ENCODE measurements at regions of chr16 and their contacts with region 1.

Region 1: GRCh38 chr16:75464130-75464918 is at the start of gene TMEM170A:
- DNase-seq: peak; percentile 85
- H3K4me3 ChIP-seq: peak within 1 kb of the TSS; percentile 85
- CTCF ChIP-seq: peak; percentile 99

Region 2: GRCh38 chr16:74320707-74321106 is 1143.6 kb before region 1 on chr16:
- CTCF ChIA-PET with region 1: no interaction called
- POLR2A ChIA-PET with region 1: no interaction called
- DNase-seq: no peak
- H3K4me3 ChIP-seq: no peak overlapping the region
- CTCF ChIP-seq: no peak

Region 3: DNA sequence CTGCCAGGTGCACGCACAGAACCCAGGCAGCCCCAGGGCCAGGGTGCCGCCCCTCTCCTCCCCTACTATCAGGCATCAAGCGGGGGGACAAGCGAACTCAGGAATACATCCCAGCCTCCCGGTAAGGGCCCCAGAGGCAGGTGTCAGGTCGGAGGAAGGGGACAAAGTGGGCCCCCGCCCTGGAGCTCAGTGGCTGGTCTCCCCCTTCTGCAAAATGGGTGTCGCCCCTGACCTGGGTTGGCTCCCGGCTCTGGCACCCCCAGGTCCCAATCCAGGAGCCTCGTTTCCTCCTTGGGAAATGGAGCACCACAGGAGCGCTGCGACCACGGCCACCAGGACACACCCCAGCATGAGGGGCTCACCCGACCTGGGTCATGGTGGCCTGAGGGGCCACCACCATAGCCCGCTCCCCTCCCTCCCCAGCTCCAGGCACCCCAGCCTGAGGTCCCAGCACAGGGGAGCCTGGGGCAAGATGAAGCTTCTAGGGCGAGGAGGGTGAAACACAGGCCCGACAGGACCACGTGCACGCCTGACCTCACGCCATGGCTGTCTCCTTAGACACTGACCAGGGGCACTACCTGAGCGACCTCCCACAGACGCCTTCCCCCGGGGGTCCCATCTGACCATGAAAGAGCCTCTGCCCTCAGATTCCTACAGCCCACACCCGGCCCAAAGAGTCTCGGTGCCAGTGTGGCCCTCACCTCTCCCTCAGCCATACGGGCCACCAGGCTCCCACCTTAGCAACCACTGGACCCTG is 224.8 kb before region 1 on chr16:
- CTCF ChIA-PET with region 1: no interaction called
- POLR2A ChIA-PET with region 1: no interaction called
- DNase-seq: no peak
- H3K4me3 ChIP-seq: no peak overlapping the region
- CTCF ChIP-seq: no peak

Region 4: DNA sequence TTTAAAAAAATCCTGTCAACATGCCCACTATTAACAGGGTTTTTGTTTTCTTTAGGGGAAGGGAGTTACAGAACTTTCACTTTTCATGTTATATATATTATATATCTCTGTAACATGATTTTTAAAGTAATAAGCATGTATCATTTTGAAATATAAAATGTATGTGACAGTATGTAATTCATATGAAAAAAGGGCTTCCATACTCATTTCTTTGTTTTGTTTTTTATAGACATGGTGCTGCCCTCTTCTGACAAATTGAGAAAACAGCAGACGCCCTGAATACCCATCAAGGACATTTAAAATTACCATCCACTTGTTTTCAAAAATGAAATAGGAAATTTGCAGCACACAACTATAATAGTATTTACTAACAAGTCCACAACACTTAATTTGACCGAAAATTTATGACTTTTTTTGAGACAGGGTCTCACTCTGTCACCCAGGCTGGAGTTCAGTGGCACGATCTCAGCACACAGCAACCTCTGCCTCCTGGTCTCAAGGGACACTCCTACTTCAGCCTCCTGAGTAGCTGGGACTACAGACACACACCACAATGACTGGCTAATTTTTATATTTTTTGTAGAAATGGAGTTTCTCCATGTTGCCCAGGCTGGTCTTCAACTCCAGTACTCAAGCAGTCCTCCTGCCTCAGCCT is 61.4 kb before region 1 on chr16:
- CTCF ChIA-PET with region 1: interaction called, 15 read pairs
- POLR2A ChIA-PET with region 1: no interaction called
- DNase-seq: no peak
- H3K4me3 ChIP-seq: no peak overlapping the region
- CTCF ChIP-seq: peak; percentile 39

Region 5: DNA sequence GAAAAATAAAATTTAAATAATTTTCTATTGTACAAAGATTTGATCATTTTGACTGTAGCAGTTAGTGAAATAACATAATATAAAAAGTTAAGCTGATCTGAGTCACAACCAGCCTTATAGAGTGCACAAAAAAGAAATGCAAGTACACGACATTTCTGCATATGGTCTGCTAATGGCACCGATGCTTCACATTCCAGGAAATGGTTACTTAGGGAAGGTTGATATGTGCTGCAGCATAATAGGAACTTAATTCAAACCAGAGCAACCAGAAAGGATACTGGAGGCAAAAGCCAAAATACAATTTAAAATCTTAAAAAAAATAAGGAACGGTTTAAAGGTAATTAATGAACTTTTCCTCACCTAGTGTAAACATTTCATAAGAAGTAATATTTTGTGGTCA is 21.0 kb before region 1 on chr16:
- CTCF ChIA-PET with region 1: interaction called, 34 read pairs
- POLR2A ChIA-PET with region 1: no interaction called
- DNase-seq: peak; percentile 66
- H3K4me3 ChIP-seq: no peak overlapping the region
- CTCF ChIP-seq: no peak

Region 6: DNA sequence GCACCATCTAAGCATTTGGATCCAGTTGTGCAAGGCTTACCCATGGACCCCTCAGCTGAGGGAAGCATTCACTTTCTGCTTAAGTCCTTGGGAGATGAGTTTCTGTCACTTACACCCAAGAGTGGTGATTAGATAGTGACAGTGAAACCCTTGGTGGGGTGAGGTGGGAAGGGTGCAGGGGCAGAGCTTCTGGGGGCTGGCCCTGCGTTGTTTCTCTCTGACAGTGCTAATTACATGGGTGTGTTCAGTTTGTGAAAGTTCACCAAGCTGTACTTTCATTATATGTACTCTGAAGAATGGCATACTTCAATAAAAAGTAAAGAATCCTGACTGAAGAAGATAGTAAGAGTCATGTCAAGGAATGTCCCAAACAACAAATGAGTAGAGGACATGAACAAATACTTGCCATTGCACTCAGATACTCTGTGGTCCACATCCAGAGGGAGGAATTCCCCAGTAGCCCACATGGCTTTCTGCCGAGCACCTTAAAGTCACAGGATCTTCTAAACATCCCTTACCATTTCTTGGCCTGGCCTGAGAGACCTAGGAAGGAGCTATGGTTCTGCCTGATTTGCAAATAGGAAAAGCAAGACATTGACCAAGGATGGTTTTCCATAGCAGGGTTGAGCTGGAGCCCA is 22.5 kb after region 1 on chr16:
- CTCF ChIA-PET with region 1: interaction called, 13 read pairs
- POLR2A ChIA-PET with region 1: no interaction called
- DNase-seq: no peak
- H3K4me3 ChIP-seq: no peak overlapping the region
- CTCF ChIP-seq: no peak

Region 7: DNA sequence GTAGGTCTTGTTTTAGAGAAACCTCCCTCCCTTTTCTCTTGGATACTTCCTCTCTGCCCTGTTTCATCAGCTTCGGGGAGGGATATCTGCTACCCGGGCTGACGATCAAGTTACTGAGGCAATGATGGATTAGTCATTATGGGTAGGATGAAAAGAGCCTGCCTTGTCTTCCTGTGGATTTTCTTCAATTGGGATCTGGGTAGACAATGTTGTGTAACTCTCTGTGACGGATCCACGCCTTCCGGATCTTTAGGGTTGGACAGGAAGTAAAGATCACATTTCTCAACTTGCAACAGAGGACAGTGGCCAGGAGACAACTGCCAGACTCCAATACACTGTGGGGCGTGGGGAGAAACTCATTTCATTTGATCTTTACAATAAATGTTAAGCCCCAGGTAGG is 42.2 kb after region 1 on chr16:
- CTCF ChIA-PET with region 1: interaction called, 13 read pairs
- POLR2A ChIA-PET with region 1: no interaction called
- DNase-seq: no peak
- H3K4me3 ChIP-seq: no peak overlapping the region
- CTCF ChIP-seq: no peak

Region 8: DNA sequence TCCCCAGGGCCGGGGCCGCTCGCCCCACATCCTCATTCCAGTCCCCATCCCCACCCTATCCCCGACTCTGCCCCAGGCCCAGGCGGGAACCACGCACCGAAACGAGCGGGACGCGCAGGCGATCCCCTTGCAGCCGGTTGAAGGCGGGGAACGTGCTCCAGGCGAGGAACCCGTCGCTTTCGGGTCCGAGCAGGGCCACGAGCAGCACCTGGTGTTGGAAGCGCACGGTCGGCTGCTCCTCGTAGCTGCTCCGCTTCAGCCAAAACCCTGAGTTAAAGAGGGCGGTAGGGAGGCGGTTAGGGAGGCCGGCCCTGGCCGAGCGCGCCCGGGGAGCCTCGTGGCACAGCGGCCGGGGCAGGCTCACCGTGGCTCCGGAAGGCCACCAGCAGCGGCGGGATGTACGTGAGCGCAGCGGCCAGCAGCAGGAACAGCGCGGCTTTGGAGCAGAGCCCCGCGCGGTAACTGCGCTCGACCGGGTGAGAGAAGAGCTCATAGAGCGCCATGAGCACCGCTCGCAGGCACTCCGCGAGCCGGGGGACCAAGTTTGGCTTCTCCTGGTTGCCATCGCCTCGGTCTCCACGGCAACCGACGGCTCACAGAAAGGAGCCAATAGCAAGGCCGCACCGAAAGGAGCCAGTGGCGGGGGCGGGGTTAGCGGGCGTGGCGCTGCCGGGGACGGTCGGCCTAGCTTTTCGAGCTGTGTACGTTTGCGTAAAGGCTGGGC is 91.5 kb after region 1 on chr16 and contains the start of gene TMEM231:
- CTCF ChIA-PET with region 1: interaction called, 52 read pairs
- POLR2A ChIA-PET with region 1: interaction called, 3 read pairs
- DNase-seq: peak; percentile 29
- H3K4me3 ChIP-seq: peak within 1 kb of the TSS; percentile 73
- CTCF ChIP-seq: peak; percentile 3